Tibial artery (tissue), 4 donors: ENCODE measurements at regions of chr1 and their contacts with region 1.

Region 1: DNA sequence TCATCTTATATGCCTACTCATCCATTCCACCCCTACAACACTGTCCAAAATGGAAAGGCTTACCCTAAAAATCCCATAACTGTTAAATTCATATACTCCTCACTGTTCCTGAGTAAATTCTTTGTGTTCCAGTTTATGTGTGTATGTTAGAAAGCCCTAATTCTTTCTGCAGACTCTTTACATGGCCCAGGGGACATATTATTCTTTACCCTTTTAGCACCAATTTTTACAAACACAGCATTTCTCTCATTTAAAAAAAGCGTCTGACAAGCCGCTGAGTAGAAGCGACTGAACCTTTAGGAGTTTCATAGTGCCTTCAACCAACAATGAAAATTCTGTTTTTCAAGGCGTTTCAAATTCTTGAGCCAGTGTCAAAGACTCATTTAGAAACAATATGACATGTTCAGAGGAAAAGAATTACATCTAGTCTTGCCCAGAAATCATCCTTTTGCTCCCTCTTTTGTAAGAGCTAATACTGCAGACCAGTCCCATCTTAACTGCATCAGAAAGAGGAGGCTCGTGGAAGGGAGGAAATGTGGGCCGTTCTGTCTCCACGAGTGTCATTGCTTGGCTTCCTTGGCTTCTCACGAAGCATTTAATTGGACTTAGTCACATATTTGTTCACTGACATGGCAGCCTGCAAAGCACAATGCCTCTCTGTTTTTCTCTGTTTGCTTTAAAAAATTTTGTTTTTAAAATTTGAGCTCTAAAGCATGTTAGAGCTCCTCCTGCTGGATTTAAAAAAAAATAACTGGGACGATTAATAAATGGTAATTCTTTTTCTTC is 21.3 kb upstream of the C1orf105 start:
- DNase-seq: peak; percentile 73 to 76
- H3K4me3 ChIP-seq: peak overlapping the region; percentile 26 to 28
- H3K27ac ChIP-seq: peak overlapping the region; percentile 74 to 77
- H3K4me1 ChIP-seq: peaks cover 0 to 72% (median 30%) of the 10 kb centered on the region in 4 donors
- H3K27me3 ChIP-seq: no peaks in the 10 kb centered on the region
- CTCF ChIP-seq: peak; percentile 59 to 77

Region 2: DNA sequence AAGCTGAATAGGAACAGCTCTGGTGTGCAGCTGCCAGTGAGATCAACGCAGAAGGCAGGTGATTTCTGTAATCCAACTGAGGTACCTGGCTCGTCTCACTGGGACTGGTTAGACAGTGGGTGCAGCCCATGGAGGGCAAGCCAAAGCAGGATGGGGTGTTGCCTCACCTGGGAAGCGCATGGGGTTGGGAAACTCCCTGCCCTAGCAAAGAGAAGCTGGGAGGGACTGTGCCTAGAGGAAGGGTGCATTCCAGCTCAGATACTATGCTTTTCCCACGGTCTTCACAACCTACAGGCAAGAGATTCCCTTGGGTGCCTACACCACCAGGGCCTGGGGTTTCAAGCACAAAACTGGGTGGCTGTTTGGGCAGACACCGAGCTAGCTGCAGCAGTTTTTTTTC is 374.6 kb before region 1 on chr1:
- intact Hi-C with region 1: no loop called
- DNase-seq: no peak
- H3K4me3 ChIP-seq: no peak overlapping the region
- H3K27ac ChIP-seq: no peak overlapping the region
- H3K4me1 ChIP-seq: no peaks in the 10 kb centered on the region
- H3K27me3 ChIP-seq: no peaks in the 10 kb centered on the region
- CTCF ChIP-seq: no peak

Region 3: GRCh38 chr1:172089768-172090510 is 309.2 kb before region 1 on chr1:
- intact Hi-C with region 1: loop called (anchors 5 kb)
- DNase-seq: peak; percentile 25 to 66
- H3K4me3 ChIP-seq: no peak overlapping the region
- H3K27ac ChIP-seq: no peak overlapping the region
- H3K4me1 ChIP-seq: peaks cover 0 to 6% (median 0%) of the 10 kb centered on the region in 4 donors
- H3K27me3 ChIP-seq: no peaks in the 10 kb centered on the region
- CTCF ChIP-seq: peak; percentile 62 to 67

Region 4: GRCh38 chr1:172134087-172134731 is 265.0 kb before region 1 on chr1:
- intact Hi-C with region 1: loop called (anchors 5 kb)
- DNase-seq: no peak
- H3K4me3 ChIP-seq: no peak overlapping the region
- H3K27ac ChIP-seq: peak overlapping the region in 1 of 2 donors; percentile 82
- H3K4me1 ChIP-seq: peaks cover 0 to 35% (median 0%) of the 10 kb centered on the region in 4 donors
- H3K27me3 ChIP-seq: no peaks in the 10 kb centered on the region
- CTCF ChIP-seq: no peak

Region 5: GRCh38 chr1:172308577-172308976 is 90.6 kb before region 1 on chr1:
- intact Hi-C with region 1: no loop called
- DNase-seq: no peak
- H3K4me3 ChIP-seq: no peak overlapping the region
- H3K27ac ChIP-seq: no peak overlapping the region
- H3K4me1 ChIP-seq: no peaks in the 10 kb centered on the region
- H3K27me3 ChIP-seq: no peaks in the 10 kb centered on the region
- CTCF ChIP-seq: no peak

Region 6: DNA sequence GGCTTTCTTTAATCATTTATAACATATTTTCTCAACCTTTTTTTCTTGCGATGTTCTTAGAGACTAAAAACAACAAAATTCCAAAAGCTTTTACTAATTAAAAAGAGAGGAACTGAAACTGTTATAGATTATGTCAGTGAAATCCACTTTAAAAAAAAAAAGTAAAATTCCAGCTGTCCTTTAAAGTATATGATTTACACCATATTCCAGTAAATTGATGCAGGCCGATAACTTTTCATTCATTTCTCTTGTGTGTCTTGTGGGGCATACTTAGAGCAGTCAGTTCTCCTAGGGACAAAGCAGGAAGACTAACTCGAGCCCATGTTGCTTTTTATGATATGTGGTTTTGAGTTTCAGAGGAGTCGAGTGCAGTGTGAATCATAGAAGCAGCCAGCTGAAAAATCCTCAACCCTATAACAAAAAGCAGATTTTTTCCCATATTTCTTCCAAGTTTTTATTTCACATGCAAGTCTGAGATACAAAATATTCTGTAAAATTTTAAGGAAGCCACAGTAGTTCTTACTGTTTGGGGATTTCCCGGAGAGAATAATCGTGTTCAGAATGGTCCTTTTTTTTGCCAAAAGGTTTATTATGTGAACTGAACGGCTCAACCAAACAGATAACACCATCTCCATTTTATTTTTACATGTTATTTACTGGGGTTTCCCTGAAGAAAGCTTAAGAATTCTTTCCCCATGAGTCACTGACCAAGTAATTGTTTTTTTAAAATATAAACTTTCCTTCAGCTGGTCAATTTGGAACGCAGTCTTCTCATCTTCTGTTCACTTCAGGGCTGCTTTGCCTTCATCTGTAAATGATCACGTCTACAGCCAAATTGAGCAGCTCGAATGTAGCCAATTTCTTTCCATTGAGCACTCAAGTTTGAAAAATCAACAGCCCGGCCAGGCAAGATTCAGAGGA is 55.7 kb before region 1 on chr1:
- intact Hi-C with region 1: loop called (anchors 10 kb)
- DNase-seq: no peak
- H3K4me3 ChIP-seq: peak overlapping the region; percentile 17 to 28
- H3K27ac ChIP-seq: peak overlapping the region; percentile 57 to 62
- H3K4me1 ChIP-seq: peaks cover 0 to 18% (median 13%) of the 10 kb centered on the region in 4 donors
- H3K27me3 ChIP-seq: no peaks in the 10 kb centered on the region
- CTCF ChIP-seq: no peak

Region 7: GRCh38 chr1:172449585-172450534 is 50.7 kb after region 1 on chr1:
- intact Hi-C with region 1: no loop called
- DNase-seq: peak; percentile 47 to 66
- H3K4me3 ChIP-seq: peak overlapping the region in 1 of 2 donors; percentile 17
- H3K27ac ChIP-seq: no peak overlapping the region
- H3K4me1 ChIP-seq: peaks cover 0 to 13% (median 2%) of the 10 kb centered on the region in 4 donors
- H3K27me3 ChIP-seq: no peaks in the 10 kb centered on the region
- CTCF ChIP-seq: peak; percentile 82 to 92